Dendritic cell treated with granulocyte-macrophage colony-stimulating factor and Interleukin-4, amounts not matched to agents 40 ng/mL and 50 ng/mL, for 4 days (primary cell): ENCODE measurements at regions of chr12 and their contacts with region 1.

Region 1: DNA sequence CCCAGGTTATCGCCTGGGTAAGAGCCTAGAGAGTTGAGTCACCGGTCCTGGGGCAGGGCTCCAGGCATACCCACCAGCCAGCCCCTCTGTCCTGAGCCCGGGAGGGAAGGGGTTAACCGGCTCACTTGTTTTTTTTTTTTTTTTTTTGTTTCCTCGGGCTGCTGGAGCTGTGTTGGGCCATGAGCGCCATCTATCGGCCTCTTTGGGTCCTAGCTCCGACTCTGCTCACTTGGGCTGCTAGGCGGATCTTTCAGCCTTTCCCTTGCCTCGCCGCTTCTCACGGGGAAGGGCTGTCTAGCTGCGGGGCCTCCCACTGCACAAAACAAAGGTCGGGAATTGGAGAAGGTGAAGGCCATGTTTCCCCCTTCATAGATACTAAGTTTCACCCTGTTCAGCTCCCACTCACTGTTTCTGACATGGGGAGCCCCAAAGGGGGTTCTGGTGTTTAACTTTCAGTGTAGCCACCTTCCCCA is 2.8 kb upstream of the SMUG1 start:
- H3K4me3 Mint-ChIP-seq: peak overlapping the region; percentile 33
- H3K27ac Mint-ChIP-seq: no peak overlapping the region
- H3K4me1 Mint-ChIP-seq: peaks cover 42% of the 10 kb centered on the region
- H3K27me3 Mint-ChIP-seq: peaks cover 37% of the 10 kb centered on the region

Region 2: GRCh38 chr12:53791735-53792326 is 399.8 kb before region 1 on chr12:
- intact Hi-C with region 1: loop called (anchors 5 kb)
- H3K4me3 Mint-ChIP-seq: no peak overlapping the region
- H3K27ac Mint-ChIP-seq: no peak overlapping the region
- H3K4me1 Mint-ChIP-seq: no peaks in the 10 kb centered on the region
- H3K27me3 Mint-ChIP-seq: peaks cover 26% of the 10 kb centered on the region

Region 3: GRCh38 chr12:54005853-54006686 is 185.5 kb before region 1 on chr12:
- intact Hi-C with region 1: loop called (anchors 1 kb)
- H3K4me3 Mint-ChIP-seq: peak overlapping the region; percentile 74
- H3K27ac Mint-ChIP-seq: peak overlapping the region; percentile 30
- H3K4me1 Mint-ChIP-seq: peaks cover 32% of the 10 kb centered on the region
- H3K27me3 Mint-ChIP-seq: peaks cover 95% of the 10 kb centered on the region

Region 4: DNA sequence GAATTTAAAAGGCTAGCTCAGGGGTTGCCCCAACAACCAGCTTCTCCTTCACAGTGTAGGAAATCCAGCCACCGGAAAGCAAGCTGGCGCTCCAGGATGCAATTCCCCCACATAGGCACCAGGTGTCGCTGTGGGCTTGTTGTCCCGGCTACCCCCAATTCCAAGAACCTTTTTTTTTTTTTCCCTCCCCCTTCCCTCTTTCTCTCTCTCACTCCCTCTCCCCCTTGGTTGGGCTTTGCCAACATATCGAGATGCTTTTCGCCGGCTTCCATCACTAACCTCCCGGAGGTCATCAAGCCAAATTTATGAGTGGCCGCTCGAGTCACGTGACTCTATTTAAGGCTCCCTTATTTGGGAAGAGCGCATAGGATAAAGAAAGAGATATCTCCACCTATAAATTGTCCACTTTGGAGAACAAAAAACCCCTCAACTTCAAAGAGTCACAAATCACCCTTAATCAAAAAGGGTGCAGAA is 158.9 kb before region 1 on chr12 and contains the start of gene HOXC5:
- intact Hi-C with region 1: loop called (anchors 2 kb)
- H3K4me3 Mint-ChIP-seq: no peak within 1 kb of the TSS
- H3K27ac Mint-ChIP-seq: no peak within 1 kb of the TSS
- H3K4me1 Mint-ChIP-seq: peaks cover 15% of the 10 kb centered on the region
- H3K27me3 Mint-ChIP-seq: peaks cover 93% of the 10 kb centered on the region

Region 5: DNA sequence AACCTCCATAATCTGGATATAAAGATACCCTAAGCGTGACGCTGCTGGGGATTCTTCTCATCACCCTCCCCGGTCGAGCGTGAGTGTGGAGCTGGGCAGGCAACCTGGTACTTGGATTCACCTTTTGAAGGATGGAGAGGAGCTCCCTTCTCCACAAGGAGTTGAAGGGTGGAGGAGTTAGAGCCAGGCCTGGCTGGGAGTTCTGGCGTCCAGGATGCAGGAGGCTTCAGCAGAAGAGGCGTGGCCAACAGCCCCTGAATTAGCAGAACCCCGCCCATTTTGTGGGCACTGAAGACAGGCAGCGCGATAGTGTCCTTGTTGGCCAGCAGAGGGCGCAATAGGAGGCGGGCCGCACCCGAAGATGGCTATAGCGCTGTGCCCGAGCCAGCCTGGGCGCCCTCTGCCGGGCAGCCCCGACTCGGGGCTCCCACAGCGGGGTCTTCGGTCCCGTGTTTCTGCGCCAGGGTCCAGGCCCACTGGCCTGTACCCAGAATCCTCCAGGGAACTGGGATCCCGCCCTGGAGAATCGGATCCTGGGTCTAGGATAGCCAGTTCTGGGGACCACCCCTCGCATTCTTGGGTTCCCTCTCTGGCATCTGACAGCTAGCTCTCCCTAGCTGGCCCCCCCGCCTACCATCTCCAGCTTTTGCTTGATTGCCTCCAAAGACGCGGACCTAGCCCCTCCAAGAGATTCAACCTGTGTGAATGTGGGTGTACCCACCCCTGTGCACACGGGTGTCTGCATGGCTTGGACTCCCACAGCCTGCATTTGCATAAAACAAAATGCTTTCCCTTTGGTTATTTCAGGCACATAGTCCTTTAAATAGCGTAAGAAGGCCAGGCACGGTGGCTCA is 23.2 kb after region 1 on chr12:
- intact Hi-C with region 1: loop called (anchors 1 kb)
- H3K4me3 Mint-ChIP-seq: peak overlapping the region; percentile 56
- H3K27ac Mint-ChIP-seq: no peak overlapping the region
- H3K4me1 Mint-ChIP-seq: peaks cover 24% of the 10 kb centered on the region
- H3K27me3 Mint-ChIP-seq: peaks cover 77% of the 10 kb centered on the region

Region 6: GRCh38 chr12:54379401-54380201 is 188.0 kb after region 1 on chr12:
- intact Hi-C with region 1: no loop called
- H3K4me3 Mint-ChIP-seq: peak overlapping the region; percentile 70
- H3K27ac Mint-ChIP-seq: peak overlapping the region; percentile 59
- H3K4me1 Mint-ChIP-seq: peaks cover 93% of the 10 kb centered on the region
- H3K27me3 Mint-ChIP-seq: no peaks in the 10 kb centered on the region